AG04449 (cell line): ENCODE measurements at regions of chr7 and their contacts with region 1.

Region 1: DNA sequence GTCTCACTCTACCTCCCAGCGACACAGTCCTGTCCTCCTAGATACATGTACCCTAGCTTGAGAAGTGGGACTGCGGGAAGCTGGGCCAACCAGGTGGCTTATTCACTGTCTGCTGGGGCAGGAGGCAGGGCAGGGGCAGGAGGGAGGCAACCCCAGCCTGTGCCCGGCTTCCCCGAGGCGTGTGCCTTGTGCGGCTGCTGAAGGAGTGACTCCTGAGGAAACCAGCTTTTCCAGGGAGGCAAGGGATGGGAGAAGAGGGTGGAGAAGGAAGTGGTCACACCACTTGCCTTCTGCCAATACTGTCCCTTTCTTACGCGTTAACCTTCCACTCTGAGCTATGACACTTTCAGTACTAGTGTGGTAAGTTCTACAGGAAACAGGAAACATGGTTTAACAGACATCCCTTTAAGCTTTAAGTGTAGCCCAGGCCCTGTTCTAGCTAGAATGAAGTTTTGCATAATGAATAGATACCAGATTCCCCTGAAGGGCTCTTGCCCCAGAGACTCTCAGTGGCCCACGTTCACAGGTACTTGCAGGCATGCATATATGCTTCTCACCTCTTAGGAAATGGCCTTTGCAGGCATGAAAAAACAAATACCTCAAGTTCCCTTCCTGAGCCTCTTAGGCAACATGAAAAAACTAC is 40.6 kb downstream of the SYPL1 start:
- DNase-seq: no peak
- H3K4me3 ChIP-seq: no peak overlapping the region
- CTCF ChIP-seq: no peak

Region 2: DNA sequence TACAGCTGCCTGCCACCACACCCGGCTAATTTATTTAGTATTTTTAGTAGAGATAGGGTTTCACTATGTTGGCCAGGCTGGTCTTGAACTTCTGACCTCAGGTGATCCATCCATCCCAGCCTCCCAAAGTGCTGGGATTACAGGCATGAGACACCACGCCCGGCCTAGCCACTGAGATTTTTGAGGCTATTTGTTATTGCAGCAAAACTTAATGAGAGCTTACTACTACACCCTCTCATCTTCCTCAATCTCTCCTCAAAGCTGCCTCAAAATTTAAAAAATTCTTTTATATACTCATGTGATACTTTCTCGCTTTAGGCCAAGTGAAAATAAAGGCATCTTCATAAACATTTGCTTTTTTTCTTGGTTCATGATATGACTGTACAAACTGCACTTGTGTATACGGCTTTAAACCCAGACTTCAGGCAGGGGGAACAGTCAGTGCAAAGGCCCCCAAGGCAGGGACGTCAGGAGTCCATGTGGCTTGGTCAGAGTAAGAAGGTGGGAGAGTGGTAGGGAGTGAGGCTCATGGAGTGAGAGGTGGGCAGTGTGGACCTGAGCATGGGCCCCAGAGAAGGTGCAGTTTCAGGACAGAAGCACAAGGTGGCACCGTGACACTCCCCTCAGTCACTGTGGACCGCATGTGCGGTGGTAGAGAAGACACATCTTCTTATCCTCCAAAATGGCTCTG is 14.8 kb before region 1 on chr7:
- CTCF ChIA-PET with region 1: interaction called, 11 read pairs
- POLR2A ChIA-PET with region 1: no interaction called
- DNase-seq: no peak
- H3K4me3 ChIP-seq: no peak overlapping the region
- CTCF ChIP-seq: peak; percentile 92